ENCODE measurements at regions of chr16 and their contacts with region 1.

Region 1: GRCh38 chr16:68237243-68238028 is 1.5 kb upstream of the ESRP2 start:
- DNase-seq: peak; percentile 94 to 99
- H3K4me3 ChIP-seq: peak overlapping the region; percentile 54 to 69
- H3K27ac ChIP-seq: peak overlapping the region; percentile 78 to 92
- H3K4me1 ChIP-seq: peaks cover 11 to 16% of the 10 kb centered on the region in 2 donors
- H3K27me3 ChIP-seq: no peaks in the 10 kb centered on the region
- CTCF ChIP-seq: peak in 1 of 3 experiments; percentile 3

Region 2: GRCh38 chr16:67935402-67936123 is 301.9 kb before region 1 on chr16:
- intact Hi-C with region 1: no loop called
- DNase-seq: peak; percentile 88 to 96
- H3K4me3 ChIP-seq: peak overlapping the region; percentile 65 to 85
- H3K27ac ChIP-seq: peak overlapping the region; percentile 88 to 92
- H3K4me1 ChIP-seq: peaks cover 7 to 16% of the 10 kb centered on the region in 2 donors
- H3K27me3 ChIP-seq: no peaks in the 10 kb centered on the region
- CTCF ChIP-seq: peak in 1 of 3 experiments; percentile 14

Region 3: GRCh38 chr16:67968400-67969253 is 268.8 kb before region 1 on chr16 and contains the start of gene SLC12A4:
- intact Hi-C with region 1: loop called (anchors 10 kb)
- DNase-seq: peak; percentile 54 to 94
- H3K4me3 ChIP-seq: peak within 1 kb of the TSS; percentile 79 to 83
- H3K27ac ChIP-seq: peak within 1 kb of the TSS; percentile 94 to 98
- H3K4me1 ChIP-seq: peaks cover 11 to 39% of the 10 kb centered on the region in 2 donors
- H3K27me3 ChIP-seq: no peaks in the 10 kb centered on the region
- CTCF ChIP-seq: no peak
- total RNA-seq, gene SLC12A4: 83.2 TPM

Region 4: GRCh38 chr16:68085259-68086071 is 152.0 kb before region 1 on chr16 and contains the start of gene NFATC3:
- intact Hi-C with region 1: loop called (anchors 2 kb)
- DNase-seq: peak; percentile 94 to 99
- H3K4me3 ChIP-seq: peak within 1 kb of the TSS; percentile 90 to 96
- H3K27ac ChIP-seq: peak within 1 kb of the TSS; percentile 98 to 99
- H3K4me1 ChIP-seq: peaks cover 11 to 21% of the 10 kb centered on the region in 2 donors
- H3K27me3 ChIP-seq: no peaks in the 10 kb centered on the region
- CTCF ChIP-seq: no peak
- total RNA-seq, gene NFATC3: 36.4 TPM

Region 5: DNA sequence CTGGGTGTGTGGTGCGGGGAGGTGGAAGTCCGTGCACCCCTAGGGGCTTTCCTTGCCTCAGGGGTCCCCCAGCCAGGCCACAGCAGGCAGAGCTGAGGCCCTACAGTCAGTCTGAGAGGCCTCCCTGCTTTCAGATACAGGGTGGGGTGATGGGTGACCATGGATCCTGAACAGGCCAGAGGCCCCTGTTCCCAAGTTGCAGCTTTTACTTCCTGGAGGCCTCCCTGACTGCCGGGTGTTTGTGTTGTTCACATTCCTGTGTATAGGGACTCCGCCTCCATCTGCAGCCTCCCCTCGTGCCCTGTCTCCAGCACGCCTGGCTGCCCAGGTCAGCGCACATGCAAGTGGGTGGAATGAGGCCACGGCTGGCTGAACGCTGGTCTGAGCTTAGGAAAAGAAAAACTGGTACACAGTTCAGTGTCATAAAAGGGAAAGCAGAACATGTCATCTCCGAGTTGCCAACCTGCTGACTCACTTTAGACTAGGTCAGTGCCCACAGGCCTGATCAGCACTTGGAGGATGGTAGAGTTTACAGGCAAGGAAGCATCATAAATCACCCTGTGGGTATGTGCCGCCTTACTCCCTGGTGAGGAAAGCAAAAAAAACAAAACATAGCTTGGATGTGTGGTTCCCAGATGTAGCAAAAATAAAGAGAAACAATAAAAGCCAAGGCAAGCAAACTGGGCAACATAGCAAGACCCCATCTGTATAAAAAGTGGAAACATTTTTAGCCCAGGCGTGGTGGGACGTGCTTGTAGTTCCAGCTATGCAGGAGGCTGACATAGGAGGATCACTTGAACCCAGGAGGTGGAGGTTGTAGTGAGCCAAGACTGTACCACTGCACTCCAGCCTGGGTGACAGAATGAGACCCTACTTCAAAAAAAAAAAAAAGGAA is 20.7 kb after region 1 on chr16:
- intact Hi-C with region 1: loop called (anchors 2 kb)
- DNase-seq: peak in 1 of 2 donors; percentile 85
- H3K4me3 ChIP-seq: no peak overlapping the region
- H3K27ac ChIP-seq: peak overlapping the region; percentile 85 to 91
- H3K4me1 ChIP-seq: peaks cover 5 to 17% of the 10 kb centered on the region in 2 donors
- H3K27me3 ChIP-seq: no peaks in the 10 kb centered on the region
- CTCF ChIP-seq: no peak

Measured in ascending aorta (tissue), 2 donors.